ENCODE measurements at regions of chr3 and their contacts with region 1.

Region 1: DNA sequence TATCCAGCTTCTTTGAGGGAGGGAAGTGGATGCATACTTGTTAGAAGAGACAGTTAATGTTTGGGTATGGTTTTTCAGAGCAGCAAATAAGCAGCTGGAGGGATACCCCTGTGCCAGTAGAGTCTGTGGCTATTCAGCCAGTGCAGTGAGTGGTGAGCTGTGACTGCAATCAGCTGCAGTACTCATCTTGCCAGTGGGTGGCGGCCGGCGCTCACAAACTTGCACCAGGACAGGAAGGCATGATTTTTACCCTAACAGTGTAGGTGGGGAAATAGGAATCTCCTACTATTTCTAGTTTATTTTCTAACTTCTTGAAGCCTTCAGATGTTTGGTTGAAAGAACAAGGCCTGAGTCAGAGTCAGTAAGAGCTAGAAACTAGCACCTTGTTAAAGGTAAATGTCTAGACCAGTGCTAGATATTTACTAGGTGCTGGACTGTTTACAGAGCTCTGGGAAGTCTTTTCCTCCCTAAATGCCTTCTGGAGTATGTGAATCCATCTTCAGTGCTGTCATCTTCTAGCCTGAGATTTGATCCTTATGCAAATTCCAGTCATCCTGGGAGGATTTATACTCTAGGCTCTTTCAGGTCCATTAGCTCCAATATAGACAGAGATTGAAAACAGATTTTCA is 23.6 kb downstream of the TIMP4 start:
- DNase-seq: peak; percentile 68 to 71
- H3K4me3 ChIP-seq: no peak overlapping the region
- H3K4me3 Mint-ChIP-seq: no peak overlapping the region
- H3K27ac Mint-ChIP-seq: no peak overlapping the region
- H3K4me1 ChIP-seq: no peaks in the 10 kb centered on the region
- H3K4me1 Mint-ChIP-seq: no peaks in the 10 kb centered on the region
- H3K27me3 ChIP-seq: no peaks in the 10 kb centered on the region; the same call in 1 of the 2 replicates
- H3K27me3 Mint-ChIP-seq: peaks cover 3% of the 10 kb centered on the region
- CTCF ChIP-seq: peak; percentile 71 to 89

Region 2: GRCh38 chr3:12024959-12025645 is 110.0 kb before region 1 on chr3:
- CTCF ChIA-PET with region 1: no interaction called
- POLR2A ChIA-PET with region 1: no interaction called
- intact Hi-C with region 1: no loop called
- DNase-seq: no peak
- H3K4me3 ChIP-seq: no peak overlapping the region
- H3K4me3 Mint-ChIP-seq: no peak overlapping the region
- H3K27ac Mint-ChIP-seq: no peak overlapping the region
- H3K4me1 ChIP-seq: no peaks in the 10 kb centered on the region
- H3K4me1 Mint-ChIP-seq: no peaks in the 10 kb centered on the region
- H3K27me3 ChIP-seq: no peaks in the 10 kb centered on the region
- H3K27me3 Mint-ChIP-seq: peaks cover 9% of the 10 kb centered on the region
- CTCF ChIP-seq: no peak

Region 3: DNA sequence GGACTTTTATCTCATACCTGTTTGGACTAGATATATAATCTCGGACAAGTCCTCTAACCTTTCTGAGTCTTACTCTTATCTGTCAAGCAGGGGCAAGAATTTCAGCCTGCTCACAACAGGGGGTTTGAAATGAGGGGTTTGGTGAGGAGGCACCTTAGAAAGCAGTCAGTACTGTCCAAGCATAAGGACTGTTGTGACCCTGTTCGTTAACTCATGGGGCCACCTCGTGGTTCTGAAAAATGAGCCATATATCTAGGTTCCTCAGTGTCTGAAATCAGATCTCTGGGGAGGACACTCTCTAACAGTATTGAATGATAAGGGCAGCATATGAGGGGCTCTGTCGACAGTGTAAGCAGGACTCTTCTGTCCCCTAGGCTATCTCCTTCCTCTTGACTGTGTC is 30.8 kb after region 1 on chr3:
- CTCF ChIA-PET with region 1: interaction called, 7 read pairs
- POLR2A ChIA-PET with region 1: no interaction called
- intact Hi-C with region 1: loop called (anchors 1 kb)
- DNase-seq: peak in 1 of 2 experiments; percentile 46
- H3K4me3 ChIP-seq: no peak overlapping the region
- H3K4me3 Mint-ChIP-seq: no peak overlapping the region
- H3K27ac Mint-ChIP-seq: no peak overlapping the region
- H3K4me1 ChIP-seq: peaks cover 15% of the 10 kb centered on the region
- H3K4me1 Mint-ChIP-seq: no peaks in the 10 kb centered on the region
- H3K27me3 ChIP-seq: no peaks in the 10 kb centered on the region
- H3K27me3 Mint-ChIP-seq: no peaks in the 10 kb centered on the region
- CTCF ChIP-seq: peak in 1 of 2 experiments; percentile 38

Region 4: GRCh38 chr3:12287727-12288191 is 152.6 kb after region 1 on chr3:
- CTCF ChIA-PET with region 1: no interaction called
- POLR2A ChIA-PET with region 1: no interaction called
- intact Hi-C with region 1: loop called (anchors 2 kb)
- DNase-seq: peak; percentile 51 to 77
- H3K4me3 ChIP-seq: peak overlapping the region; percentile 92
- H3K4me3 Mint-ChIP-seq: peak overlapping the region; percentile 75
- H3K27ac Mint-ChIP-seq: no peak overlapping the region
- H3K4me1 ChIP-seq: peaks cover 7% of the 10 kb centered on the region
- H3K4me1 Mint-ChIP-seq: no peaks in the 10 kb centered on the region
- H3K27me3 ChIP-seq: no peaks in the 10 kb centered on the region
- H3K27me3 Mint-ChIP-seq: no peaks in the 10 kb centered on the region
- CTCF ChIP-seq: no peak

Region 5: DNA sequence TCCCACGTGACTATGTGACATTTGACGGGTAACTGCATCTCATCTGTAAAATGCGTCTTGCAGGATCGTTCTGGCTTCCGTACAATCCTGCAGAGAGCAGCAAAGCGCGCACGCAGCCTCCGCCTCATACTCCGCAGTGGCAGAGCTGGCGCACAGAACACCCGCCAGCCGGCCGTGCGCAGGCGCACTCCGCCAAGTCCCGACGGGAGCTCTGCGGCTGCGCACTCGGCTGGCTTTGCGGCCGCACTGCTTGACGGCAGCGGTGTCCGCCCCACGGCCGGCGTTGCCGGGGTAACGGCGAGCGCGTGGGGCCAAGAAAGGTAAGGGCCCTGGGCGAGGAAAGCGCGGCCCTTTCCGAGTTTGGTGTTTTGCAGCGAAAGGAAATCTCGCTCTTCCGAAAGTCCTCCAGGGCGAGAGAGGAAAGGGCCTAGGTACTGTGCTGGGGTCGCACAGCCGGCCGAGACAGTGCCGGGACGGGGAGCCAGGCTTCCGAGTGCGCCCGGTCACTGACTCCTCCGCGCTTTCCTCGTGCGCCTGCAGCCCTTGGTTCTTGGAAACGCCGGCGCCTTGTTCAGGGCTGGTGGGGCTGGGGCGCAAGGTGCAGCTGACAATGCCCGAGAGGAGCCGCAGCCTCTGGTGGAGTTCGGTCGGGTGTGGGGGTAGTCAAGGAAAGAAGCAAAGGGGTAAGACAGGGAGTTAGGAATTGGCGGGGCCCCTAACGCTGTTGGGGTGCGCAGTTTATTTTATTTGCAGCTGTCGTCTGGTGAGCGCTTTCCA is 349.2 kb after region 1 on chr3 and contains the start of gene TSEN2:
- CTCF ChIA-PET with region 1: interaction called, 25 read pairs
- POLR2A ChIA-PET with region 1: no interaction called
- intact Hi-C with region 1: loop called (anchors 1 kb)
- DNase-seq: peak; percentile 93 to 97
- H3K4me3 ChIP-seq: peak within 1 kb of the TSS; percentile 74
- H3K4me3 Mint-ChIP-seq: peak within 1 kb of the TSS; percentile 96
- H3K27ac Mint-ChIP-seq: peak within 1 kb of the TSS; percentile 98
- H3K4me1 ChIP-seq: peaks cover 18% of the 10 kb centered on the region
- H3K4me1 Mint-ChIP-seq: peaks cover 20% of the 10 kb centered on the region
- H3K27me3 ChIP-seq: no peaks in the 10 kb centered on the region
- H3K27me3 Mint-ChIP-seq: no peaks in the 10 kb centered on the region
- CTCF ChIP-seq: peak in 1 of 2 experiments; percentile 25
- total RNA-seq, gene TSEN2: 18.3 and 19.6 TPM in 2 replicates

Region 6: GRCh38 chr3:12891985-12892839 is 757.1 kb after region 1 on chr3:
- CTCF ChIA-PET with region 1: no interaction called
- POLR2A ChIA-PET with region 1: no interaction called
- intact Hi-C with region 1: loop called (anchors 5 kb)
- DNase-seq: peak in 1 of 2 experiments; percentile 55
- H3K4me3 ChIP-seq: no peak overlapping the region
- H3K4me3 Mint-ChIP-seq: no peak overlapping the region
- H3K27ac Mint-ChIP-seq: no peak overlapping the region
- H3K4me1 ChIP-seq: peaks cover 14% of the 10 kb centered on the region
- H3K4me1 Mint-ChIP-seq: peaks cover 23% of the 10 kb centered on the region
- H3K27me3 ChIP-seq: no peaks in the 10 kb centered on the region
- H3K27me3 Mint-ChIP-seq: peaks cover 7% of the 10 kb centered on the region
- CTCF ChIP-seq: peak; percentile 82 to 85

Measured in Caco-2 (cell line).